RWPE1 (cell line): ENCODE measurements at regions of chr18 and their contacts with region 1.

Region 1: DNA sequence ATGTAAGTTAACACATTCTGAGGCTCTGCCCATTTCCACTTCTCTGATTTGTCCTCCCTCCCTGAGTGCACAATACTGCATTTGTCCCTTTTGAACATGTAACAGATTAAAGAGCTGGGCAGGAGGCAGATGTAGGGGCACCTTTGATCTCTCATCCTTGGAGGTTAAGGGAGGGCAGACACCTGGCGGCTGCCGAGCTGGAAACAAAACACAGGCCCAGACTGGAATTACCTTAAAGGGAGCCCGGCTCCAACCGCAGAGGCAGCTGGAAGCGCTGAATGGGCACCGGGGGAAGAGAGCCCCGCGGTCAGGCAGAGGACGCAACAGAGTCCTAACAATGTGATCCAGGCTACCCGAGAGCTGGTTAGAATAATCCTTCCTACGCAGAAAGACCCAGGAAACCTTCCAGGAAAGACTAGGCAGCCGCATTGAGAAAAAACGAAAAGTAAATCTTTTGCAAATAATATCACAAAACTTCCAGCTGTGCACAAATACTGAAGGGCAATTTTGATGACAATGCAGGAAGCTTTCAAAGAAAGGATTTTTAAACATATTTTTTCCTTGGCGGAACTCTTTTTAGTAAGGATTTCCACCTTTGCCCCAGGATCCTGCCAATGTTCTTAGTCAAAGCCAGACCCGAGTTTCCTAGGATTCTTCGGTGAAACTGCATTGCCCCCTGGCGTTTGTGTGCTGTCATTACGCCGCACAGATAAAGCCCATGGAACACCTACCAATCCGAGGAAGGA is 216.0 kb downstream of the TGIF1 start:
- DNase-seq: peak; percentile 91
- H3K27ac ChIP-seq: peak overlapping the region; percentile 92
- CTCF ChIP-seq: peak; percentile 92

Region 2: DNA sequence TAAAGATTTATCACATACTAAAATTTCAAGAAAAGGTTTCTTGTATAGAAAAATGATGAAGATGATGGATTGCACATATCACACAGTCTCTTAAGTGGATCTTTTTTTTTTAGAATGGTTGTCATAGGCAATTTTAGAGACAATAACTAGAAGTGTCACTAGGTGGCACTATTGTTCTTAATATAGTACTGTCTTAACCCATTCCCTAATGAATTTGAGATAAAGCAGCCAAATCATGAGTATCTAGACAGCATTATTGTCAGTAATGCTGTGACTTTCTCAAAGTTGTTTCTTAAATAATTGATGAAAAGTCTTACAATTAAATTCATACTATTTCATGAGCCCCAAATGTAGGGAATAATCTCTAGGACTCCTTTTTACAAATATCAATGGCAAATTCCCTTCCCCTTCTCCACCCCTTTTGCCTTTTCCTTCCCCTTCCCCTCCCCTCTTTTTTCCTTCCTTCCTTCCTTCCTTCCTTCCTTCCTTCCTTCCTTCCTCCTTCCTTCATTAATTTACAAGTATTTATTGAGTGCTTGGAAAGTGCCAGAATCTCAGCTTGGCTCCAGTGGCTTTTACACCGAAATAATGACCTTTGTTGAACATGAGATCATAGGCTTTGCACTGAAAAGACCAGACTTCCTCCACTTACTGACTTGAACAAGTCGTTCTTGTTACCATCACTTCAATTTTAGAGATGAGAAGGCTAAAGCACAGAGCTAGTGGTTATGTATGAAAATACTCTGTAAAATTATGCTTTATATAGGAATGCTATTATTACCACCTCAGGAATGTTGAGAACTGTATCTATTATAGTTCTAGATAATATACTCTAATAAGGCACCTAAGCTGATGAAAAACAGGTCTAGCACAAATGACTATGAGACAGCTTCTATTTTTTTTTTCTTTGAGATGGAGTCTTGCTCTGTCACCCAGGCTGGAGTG is 384.2 kb before region 1 on chr18:
- CTCF ChIA-PET with region 1: interaction called, 18 read pairs
- POLR2A ChIA-PET with region 1: interaction called, 3 read pairs
- DNase-seq: peak; percentile 70
- H3K27ac ChIP-seq: no peak overlapping the region
- CTCF ChIP-seq: peak; percentile 56

Region 3: DNA sequence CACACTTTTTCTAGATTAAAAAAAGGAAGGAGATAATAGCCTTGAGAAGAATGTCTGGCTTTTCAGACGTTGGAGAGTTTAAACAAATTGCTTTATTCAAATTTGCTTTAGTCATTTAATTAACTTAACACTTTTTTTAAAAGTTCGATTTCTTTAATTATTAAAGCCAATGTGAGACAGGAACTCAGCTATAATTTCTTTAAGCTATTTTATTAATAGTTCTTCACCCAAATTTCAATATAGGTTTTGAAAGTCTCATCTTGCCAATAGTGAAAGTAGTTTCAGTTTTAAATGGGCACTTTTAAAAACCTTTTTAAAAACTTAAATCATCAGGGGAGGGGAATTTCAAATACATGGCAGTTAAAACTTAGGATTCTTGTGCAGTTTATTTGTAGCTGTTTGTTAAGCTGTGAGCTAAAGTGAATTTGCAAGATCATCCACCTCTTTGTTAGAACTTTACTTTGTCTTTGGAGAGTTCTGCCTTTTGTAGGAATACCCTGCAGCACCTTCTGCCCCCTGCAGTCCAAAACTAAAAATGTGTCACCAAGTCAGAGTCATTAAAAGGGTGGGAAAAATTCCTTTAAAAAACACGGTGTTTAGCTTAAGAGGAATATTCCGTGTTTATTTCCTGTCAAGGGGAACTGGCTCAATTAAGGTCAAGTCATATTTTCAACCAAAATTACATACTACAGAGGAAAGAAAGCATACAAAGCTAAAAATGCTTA is 211.4 kb before region 1 on chr18:
- CTCF ChIA-PET with region 1: interaction called, 10 read pairs
- POLR2A ChIA-PET with region 1: interaction called, 3 read pairs
- DNase-seq: no peak
- H3K27ac ChIP-seq: no peak overlapping the region
- CTCF ChIP-seq: peak; percentile 75

Region 4: GRCh38 chr18:3593904-3594661 is 71.9 kb before region 1 on chr18:
- CTCF ChIA-PET with region 1: interaction called, 27 read pairs
- POLR2A ChIA-PET with region 1: interaction called, 3 read pairs
- DNase-seq: peak; percentile 94
- H3K27ac ChIP-seq: peak overlapping the region; percentile 98
- CTCF ChIP-seq: peak; percentile 95

Region 5: DNA sequence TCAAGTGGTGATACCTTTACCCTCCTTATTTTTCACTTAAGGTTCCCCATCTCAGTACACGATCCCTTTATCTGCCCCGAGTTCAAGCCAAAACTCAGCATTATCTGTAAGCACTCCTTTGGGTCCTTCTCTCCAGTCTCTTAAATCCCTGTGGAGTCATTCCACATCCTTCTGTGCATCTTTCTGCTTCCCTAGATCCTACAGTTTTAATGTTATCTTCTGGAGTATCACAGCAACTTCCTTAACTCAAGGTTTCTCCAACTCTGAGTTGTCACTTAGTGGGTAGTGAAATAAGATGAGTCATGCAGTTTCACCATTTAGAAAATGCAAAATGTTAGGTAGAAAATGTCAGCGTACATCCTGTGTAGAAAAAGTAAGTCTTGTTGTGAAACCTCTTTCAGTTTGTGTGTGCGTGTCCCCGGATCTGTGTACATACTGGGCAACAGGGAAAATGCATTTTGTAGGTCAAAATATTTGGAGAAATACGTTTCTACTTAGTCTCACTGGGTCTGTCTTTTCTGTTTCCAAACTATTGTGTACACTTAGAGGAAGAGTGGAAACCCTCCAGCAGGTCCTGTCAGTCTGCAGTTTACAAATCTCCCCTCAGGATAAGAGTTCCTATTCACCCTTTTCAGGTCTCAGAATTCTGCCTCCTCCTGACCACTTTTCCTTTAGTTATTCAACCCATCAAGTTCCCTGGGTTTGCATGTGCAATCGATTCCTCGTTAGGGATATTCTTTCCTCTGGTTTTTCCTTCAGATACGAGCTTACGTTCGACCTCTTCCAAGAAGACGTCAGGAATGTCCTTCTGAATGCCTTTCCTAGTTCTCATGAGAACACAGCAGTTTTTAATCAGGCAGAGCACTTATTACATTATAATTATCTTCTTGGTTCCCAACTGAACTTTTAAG is 61.2 kb before region 1 on chr18:
- CTCF ChIA-PET with region 1: interaction called, 15 read pairs
- POLR2A ChIA-PET with region 1: interaction called, 18 read pairs
- DNase-seq: no peak
- H3K27ac ChIP-seq: peak overlapping the region; percentile 94
- CTCF ChIP-seq: no peak

Region 6: GRCh38 chr18:3652380-3653262 is 13.3 kb before region 1 on chr18:
- CTCF ChIA-PET with region 1: interaction called, 23 read pairs
- POLR2A ChIA-PET with region 1: no interaction called
- DNase-seq: peak; percentile 97
- H3K27ac ChIP-seq: peak overlapping the region; percentile 93
- CTCF ChIP-seq: no peak